MCF 10A (cell line): ENCODE measurements at regions of chr17 and their contacts with region 1.

Region 1: DNA sequence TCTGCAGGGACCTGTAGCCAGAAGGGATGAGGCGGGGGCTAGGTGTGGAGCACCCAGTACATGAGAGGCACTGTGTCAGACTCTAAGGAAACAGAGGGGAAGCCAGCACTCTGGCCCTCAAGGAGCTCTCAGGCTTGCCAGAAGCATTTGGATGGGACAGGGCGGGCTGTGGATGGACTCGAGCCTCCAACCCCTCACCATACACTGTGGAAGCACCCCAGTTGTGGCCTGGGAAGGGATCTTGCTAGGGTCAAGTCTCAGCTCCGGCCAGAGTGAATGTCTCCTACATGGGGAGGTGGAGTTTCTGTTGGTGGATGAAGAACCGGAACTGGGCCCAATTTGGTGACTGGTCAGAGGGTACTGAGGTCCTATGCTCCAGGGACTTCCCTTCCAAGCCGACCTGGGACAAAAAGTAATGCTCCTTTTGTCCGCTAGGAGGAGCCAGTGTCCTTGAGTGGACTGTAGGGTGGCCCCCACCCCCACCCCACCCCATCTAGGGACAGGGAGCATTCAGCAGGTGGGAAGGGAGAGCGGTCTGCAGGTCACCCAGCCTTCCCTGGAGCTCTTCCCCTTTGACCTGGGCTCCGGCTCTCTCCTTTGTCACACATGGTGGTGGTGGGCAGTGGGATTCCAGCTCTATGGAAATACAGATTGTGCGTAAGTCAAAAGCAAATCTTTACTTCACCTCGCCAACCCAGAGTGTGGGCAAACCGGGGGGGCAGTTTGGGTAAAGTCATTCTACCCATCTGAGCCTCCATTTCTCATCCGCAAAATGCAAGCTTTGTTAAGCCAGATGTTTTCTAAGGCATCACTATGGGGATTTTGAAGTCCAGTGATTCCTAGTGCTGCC is 20.4 kb upstream of the PHB1 start:
- DNase-seq: peak; percentile 70
- H3K4me3 Mint-ChIP-seq: no peak overlapping the region
- H3K27ac Mint-ChIP-seq: no peak overlapping the region
- H3K4me1 Mint-ChIP-seq: no peaks in the 10 kb centered on the region
- H3K27me3 Mint-ChIP-seq: peaks cover 52% of the 10 kb centered on the region
- CTCF ChIP-seq: peak; percentile 93

Region 2: GRCh38 chr17:49414622-49415350 is 20.3 kb before region 1 on chr17 and contains the start of gene PHB1:
- CTCF ChIA-PET with region 1: interaction called, 12 read pairs
- POLR2A ChIA-PET with region 1: interaction called, 3 read pairs
- intact Hi-C with region 1: no loop called
- DNase-seq: peak; percentile 98
- H3K4me3 Mint-ChIP-seq: peak within 1 kb of the TSS; percentile 84
- H3K27ac Mint-ChIP-seq: peak within 1 kb of the TSS; percentile 78
- H3K4me1 Mint-ChIP-seq: peaks cover 6% of the 10 kb centered on the region
- H3K27me3 Mint-ChIP-seq: no peaks in the 10 kb centered on the region
- CTCF ChIP-seq: no peak
- total RNA-seq, gene PHB1: 122 and 134 TPM in 2 replicates

Region 3: GRCh38 chr17:49425004-49425286 is 10.1 kb before region 1 on chr17:
- CTCF ChIA-PET with region 1: interaction called, 14 read pairs
- POLR2A ChIA-PET with region 1: no interaction called
- intact Hi-C with region 1: no loop called
- DNase-seq: no peak
- H3K4me3 Mint-ChIP-seq: no peak overlapping the region
- H3K27ac Mint-ChIP-seq: no peak overlapping the region
- H3K4me1 Mint-ChIP-seq: no peaks in the 10 kb centered on the region
- H3K27me3 Mint-ChIP-seq: peaks cover 16% of the 10 kb centered on the region
- CTCF ChIP-seq: no peak

Region 4: DNA sequence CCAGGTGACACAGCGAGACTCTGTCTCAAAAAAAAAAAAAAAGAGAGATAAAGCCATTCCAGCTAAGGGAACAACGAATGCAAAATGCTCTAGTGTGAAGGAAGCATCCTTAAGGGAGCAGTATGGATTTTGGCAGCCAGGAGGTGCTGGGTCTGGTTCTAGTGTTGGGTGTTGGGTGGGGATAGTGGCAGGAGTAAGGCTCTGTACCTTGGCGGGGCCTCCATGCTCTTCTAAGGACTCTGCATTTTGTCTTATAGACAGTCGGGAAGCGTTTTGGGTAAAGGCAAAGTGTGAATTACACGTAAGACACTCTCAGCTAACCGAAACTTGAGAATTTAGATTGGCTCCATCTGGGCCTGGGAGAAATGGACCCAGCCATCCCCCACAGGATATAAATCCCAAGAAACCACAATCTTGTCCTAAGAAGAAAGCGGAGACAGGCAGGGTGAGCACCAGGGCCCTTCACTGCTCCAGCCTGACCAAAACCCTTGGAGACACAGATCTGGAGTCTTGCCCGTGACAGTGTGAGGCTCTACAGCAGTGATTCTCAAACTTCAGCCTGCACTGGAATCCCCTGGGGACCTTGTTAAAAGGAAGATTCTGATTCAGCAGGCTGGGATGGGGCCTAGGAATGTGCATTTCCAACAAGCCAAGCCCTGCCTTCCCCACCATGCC is 12.7 kb after region 1 on chr17:
- CTCF ChIA-PET with region 1: interaction called, 22 read pairs
- POLR2A ChIA-PET with region 1: interaction called, 3 read pairs
- intact Hi-C with region 1: no loop called
- DNase-seq: no peak
- H3K4me3 Mint-ChIP-seq: no peak overlapping the region
- H3K27ac Mint-ChIP-seq: no peak overlapping the region
- H3K4me1 Mint-ChIP-seq: no peaks in the 10 kb centered on the region
- H3K27me3 Mint-ChIP-seq: peaks cover 31% of the 10 kb centered on the region
- CTCF ChIP-seq: no peak

Region 5: GRCh38 chr17:49496183-49496866 is 61.3 kb after region 1 on chr17:
- CTCF ChIA-PET with region 1: interaction called, 6 read pairs
- POLR2A ChIA-PET with region 1: interaction called, 3 read pairs
- intact Hi-C with region 1: loop called (anchors 2 kb)
- DNase-seq: peak; percentile 53
- H3K4me3 Mint-ChIP-seq: peak overlapping the region; percentile 58
- H3K27ac Mint-ChIP-seq: no peak overlapping the region
- H3K4me1 Mint-ChIP-seq: peaks cover 14% of the 10 kb centered on the region
- H3K27me3 Mint-ChIP-seq: peaks cover 66% of the 10 kb centered on the region
- CTCF ChIP-seq: peak; percentile 86

Region 6: GRCh38 chr17:49548506-49549310 is 113.7 kb after region 1 on chr17:
- CTCF ChIA-PET with region 1: interaction called, 165 read pairs
- POLR2A ChIA-PET with region 1: interaction called, 4 read pairs
- intact Hi-C with region 1: loop called (anchors 1 kb)
- DNase-seq: peak; percentile 60
- H3K4me3 Mint-ChIP-seq: no peak overlapping the region
- H3K27ac Mint-ChIP-seq: no peak overlapping the region
- H3K4me1 Mint-ChIP-seq: peaks cover 29% of the 10 kb centered on the region
- H3K27me3 Mint-ChIP-seq: no peaks in the 10 kb centered on the region
- CTCF ChIP-seq: peak; percentile 88